Activated CD8-positive, alpha-beta T cell treated with anti-CD3 and anti-CD28 coated beads, Interleukin-2, amount 10 ng/mL, durations not matched to agents 7 days and 5 days (primary cell): ENCODE measurements at regions of chr14 and their contacts with region 1.

Region 1: DNA sequence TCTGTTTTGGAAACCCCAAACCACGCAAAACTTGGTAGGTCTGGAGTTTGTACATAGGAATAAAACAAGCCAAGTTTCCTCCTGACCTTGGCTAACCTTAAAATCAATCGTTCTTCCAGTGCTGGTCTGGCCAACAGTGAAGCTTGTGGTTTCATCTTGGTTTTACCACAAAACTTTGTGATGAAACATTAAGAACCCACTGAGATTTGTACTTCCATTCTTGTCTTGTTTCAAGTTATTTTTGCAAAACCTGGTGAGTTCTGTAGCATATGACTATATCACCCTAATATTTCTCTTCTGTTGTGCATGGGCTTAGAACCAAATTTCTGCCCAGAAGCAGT is 26.4 kb downstream of the SIX1 start:
- DNase-seq: no peak
- ATAC-seq: no peak
- H3K4me3 Mint-ChIP-seq: no peak overlapping the region
- H3K27ac Mint-ChIP-seq: no peak overlapping the region
- H3K4me1 Mint-ChIP-seq: peaks cover 3% of the 10 kb centered on the region
- H3K27me3 Mint-ChIP-seq: peaks cover 24% of the 10 kb centered on the region

Region 2: DNA sequence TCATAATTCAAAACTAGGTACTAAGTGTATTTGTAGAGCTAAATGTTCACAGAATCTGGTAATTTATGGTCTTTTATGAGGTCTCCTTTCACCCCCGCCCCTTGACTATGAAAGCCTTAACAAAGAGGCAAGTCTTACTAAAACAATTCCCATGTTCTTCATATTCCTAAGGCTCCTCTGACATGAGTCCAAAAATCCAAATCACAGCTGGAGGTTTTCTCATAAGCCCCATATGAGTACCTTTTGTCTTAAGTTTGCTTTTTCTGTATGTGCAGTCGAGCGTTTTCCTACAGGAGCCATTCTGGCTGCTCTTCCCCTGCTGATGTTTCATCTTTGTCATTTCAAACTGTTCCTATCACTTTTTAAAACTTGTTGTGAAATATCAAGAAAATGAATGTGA is 28.8 kb before region 1 on chr14:
- CTCF ChIA-PET with region 1: no interaction called
- POLR2A ChIA-PET with region 1: no interaction called
- DNase-seq: no peak
- ATAC-seq: no peak
- H3K4me3 Mint-ChIP-seq: no peak overlapping the region
- H3K27ac Mint-ChIP-seq: no peak overlapping the region
- H3K4me1 Mint-ChIP-seq: no peaks in the 10 kb centered on the region
- H3K27me3 Mint-ChIP-seq: peaks cover 17% of the 10 kb centered on the region

Region 3: GRCh38 chr14:61025251-61026223 is 402.6 kb after region 1 on chr14:
- CTCF ChIA-PET with region 1: interaction called, 49 read pairs
- POLR2A ChIA-PET with region 1: no interaction called
- DNase-seq: peak; percentile 71
- ATAC-seq: no peak
- H3K4me3 Mint-ChIP-seq: no peak overlapping the region
- H3K27ac Mint-ChIP-seq: no peak overlapping the region
- H3K4me1 Mint-ChIP-seq: no peaks in the 10 kb centered on the region
- H3K27me3 Mint-ChIP-seq: no peaks in the 10 kb centered on the region

Region 4: GRCh38 chr14:61033054-61033453 is 410.2 kb after region 1 on chr14:
- CTCF ChIA-PET with region 1: interaction called, 49 read pairs
- POLR2A ChIA-PET with region 1: no interaction called
- DNase-seq: no peak
- ATAC-seq: no peak
- H3K4me3 Mint-ChIP-seq: no peak overlapping the region
- H3K27ac Mint-ChIP-seq: no peak overlapping the region
- H3K4me1 Mint-ChIP-seq: peaks cover 7% of the 10 kb centered on the region
- H3K27me3 Mint-ChIP-seq: no peaks in the 10 kb centered on the region

Region 5: GRCh38 chr14:61252369-61253063 is 629.6 kb after region 1 on chr14:
- CTCF ChIA-PET with region 1: interaction called, 46 read pairs
- POLR2A ChIA-PET with region 1: no interaction called
- DNase-seq: peak; percentile 74
- ATAC-seq: peak; percentile 95
- H3K4me3 Mint-ChIP-seq: no peak overlapping the region
- H3K27ac Mint-ChIP-seq: no peak overlapping the region
- H3K4me1 Mint-ChIP-seq: peaks cover 11% of the 10 kb centered on the region
- H3K27me3 Mint-ChIP-seq: peaks cover 21% of the 10 kb centered on the region